Mucosa of descending colon (tissue), 3 donors: ENCODE measurements at regions of chr16 and their contacts with region 1.

Region 1: DNA sequence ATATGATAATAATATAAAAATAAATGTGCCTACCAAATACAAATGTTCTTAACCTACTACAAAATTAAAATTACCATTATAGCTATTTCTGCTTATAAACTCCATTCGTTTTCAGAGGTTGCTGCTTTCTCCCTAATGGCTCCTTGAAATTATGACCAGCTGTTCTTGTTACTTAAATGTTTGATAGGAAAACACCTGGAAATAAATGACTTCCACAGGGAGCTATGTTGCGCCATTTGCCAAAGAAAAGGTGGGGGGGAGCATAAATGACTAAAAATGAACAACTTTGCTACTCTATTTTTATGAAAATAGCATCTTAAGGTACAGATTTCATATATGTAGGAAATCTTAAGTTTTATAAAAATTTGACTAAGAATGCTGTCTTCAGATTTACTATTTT is 157.5 kb upstream of the MON1B start:
- DNase-seq: no peak
- ATAC-seq: no peak
- H3K4me3 ChIP-seq: no peak overlapping the region
- H3K4me1 ChIP-seq: no peaks in the 10 kb centered on the region
- CTCF ChIP-seq: no peak

Region 2: DNA sequence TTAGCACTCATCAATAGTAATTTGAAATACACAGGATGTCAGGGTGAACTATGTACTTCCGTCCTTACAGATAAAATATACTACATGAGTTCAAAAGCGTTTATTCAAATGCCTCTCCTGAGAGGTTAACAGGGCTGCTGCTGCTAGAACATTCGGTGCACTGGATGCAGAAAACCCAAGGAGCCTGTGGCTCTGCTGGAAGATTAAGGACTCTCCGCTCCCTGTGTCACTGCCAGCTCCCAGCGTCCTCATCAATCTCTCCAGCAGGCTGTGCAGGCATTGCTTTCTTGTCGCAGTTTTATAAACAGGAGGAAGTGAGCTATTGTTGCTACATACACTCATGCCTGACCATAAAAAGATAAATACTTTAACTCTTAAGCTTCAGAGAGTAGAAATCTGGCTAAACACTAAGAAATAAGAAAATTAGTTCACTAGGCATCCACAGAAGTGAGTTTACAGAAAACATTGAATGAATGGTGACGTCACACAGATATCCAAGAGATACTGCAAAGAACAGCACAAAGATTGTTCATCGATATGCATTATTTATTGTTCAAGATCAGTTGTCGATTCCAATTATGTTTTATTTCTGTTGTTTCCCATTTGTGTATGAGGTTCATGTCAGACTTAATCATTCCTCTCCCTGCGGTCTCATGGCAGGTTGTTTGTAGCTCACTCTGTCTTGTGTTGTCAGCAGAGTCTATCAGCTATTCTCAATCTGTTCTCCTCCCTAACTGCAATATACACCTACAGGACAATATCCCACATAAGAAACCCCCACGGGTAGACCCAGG is 29.6 kb after region 1 on chr16:
- intact Hi-C with region 1: loop called in 1 of 2 experiments (anchors 1 kb)
- DNase-seq: no peak
- ATAC-seq: no peak
- H3K4me3 ChIP-seq: no peak overlapping the region
- H3K4me1 ChIP-seq: no peaks in the 10 kb centered on the region
- CTCF ChIP-seq: no peak

Region 3: GRCh38 chr16:77271532-77272426 is 238.3 kb after region 1 on chr16:
- intact Hi-C with region 1: no loop called
- DNase-seq: no peak
- ATAC-seq: no peak
- H3K4me3 ChIP-seq: no peak overlapping the region
- H3K4me1 ChIP-seq: no peaks in the 10 kb centered on the region
- CTCF ChIP-seq: no peak

Region 4: DNA sequence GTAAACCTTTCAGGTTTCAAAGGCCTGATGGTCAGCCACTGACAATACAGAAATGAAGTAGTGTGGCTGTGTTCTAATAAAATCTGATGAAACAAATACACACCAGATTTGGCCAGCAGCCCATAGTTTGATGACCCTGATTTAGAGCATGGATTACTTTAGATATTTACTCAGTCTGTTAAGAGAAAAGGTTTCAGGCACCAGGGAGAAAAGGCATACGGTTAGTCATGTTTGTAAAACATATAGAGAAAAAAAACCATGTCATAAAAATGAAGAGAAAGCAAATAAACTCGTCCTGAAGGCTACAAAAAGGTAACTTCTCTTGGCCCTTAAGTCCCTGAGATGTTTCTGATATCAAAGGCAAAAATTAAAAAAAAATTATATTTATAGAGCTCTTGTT is 289.2 kb after region 1 on chr16:
- intact Hi-C with region 1: no loop called
- DNase-seq: peak in 1 of 3 donors; percentile 21
- ATAC-seq: peak; percentile 41
- H3K4me3 ChIP-seq: no peak overlapping the region
- H3K4me1 ChIP-seq: no peaks in the 10 kb centered on the region
- CTCF ChIP-seq: no peak